ENCODE measurements at regions of chr6 and their contacts with region 1.

Region 1: DNA sequence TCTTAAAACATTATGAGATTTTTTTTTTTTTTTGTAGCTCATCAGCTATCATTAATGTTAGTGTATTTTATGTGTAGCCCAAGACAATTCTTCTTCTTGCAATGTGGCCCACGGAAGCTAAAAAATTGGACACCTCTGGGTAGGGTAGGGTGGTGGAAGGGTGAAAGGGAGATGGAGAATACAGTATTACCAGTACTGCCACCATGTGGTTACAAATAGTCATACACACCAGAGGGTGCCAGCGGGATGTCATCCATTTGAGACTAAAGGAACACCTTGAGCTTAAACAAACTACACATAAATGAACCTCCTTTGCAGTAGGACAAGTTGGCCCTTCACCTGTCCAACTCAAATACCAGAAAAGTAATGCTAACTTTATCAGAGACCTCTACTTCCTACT is 601.9 kb downstream of the HTR1B start:
- DNase-seq: peak; percentile 11
- H3K4me3 ChIP-seq: no peak overlapping the region
- H3K27ac ChIP-seq: no peak overlapping the region
- H3K4me1 ChIP-seq: no peaks in the 10 kb centered on the region
- H3K27me3 ChIP-seq: no peaks in the 10 kb centered on the region
- CTCF ChIP-seq: peak; percentile 31 to 55

Region 2: GRCh38 chr6:75934643-75935472 is 926.5 kb before region 1 on chr6:
- CTCF ChIA-PET with region 1: no interaction called
- dilution Hi-C with region 1: no loop called
- in situ Hi-C with region 1: no loop called
- intact Hi-C with region 1: loop called (anchors 2 kb)
- DNase-seq: peak; percentile 57
- H3K4me3 ChIP-seq: peak overlapping the region; percentile 25 to 44 (median 43)
- H3K27ac ChIP-seq: no peak overlapping the region
- H3K4me1 ChIP-seq: peaks cover 6% of the 10 kb centered on the region
- H3K27me3 ChIP-seq: no peaks in the 10 kb centered on the region
- CTCF ChIP-seq: peak; percentile 66 to 83

Region 3: GRCh38 chr6:76682842-76683241 is 178.6 kb before region 1 on chr6:
- CTCF ChIA-PET with region 1: no interaction called
- dilution Hi-C with region 1: no loop called
- in situ Hi-C with region 1: loop called in 1 of 2 experiments (anchors 25 kb)
- intact Hi-C with region 1: loop called (anchors 5 kb)
- DNase-seq: no peak
- H3K4me3 ChIP-seq: no peak overlapping the region
- H3K27ac ChIP-seq: no peak overlapping the region
- H3K4me1 ChIP-seq: no peaks in the 10 kb centered on the region
- H3K27me3 ChIP-seq: no peaks in the 10 kb centered on the region
- CTCF ChIP-seq: peak; percentile 34 to 41

Region 4: DNA sequence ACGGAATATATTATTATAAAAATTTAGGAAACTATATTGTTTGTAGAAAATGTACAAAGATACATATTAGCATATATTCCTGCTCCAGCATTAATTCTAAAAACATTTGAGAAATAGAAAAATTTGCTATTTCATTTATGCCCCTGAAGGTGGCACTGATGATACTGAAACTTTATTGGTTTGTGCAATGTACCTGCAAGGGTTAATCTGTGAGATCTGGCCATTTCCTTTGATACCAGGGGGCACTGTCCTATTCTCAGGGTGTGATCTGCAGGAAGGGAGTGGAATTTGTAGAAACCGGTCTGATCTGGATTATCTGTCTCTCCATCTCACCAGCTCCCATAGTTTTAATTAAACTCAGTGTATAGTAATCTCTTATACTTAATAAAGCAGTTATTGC is 163.8 kb before region 1 on chr6:
- CTCF ChIA-PET with region 1: no interaction called
- dilution Hi-C with region 1: no loop called
- in situ Hi-C with region 1: loop called in 1 of 2 experiments (anchors 25 kb)
- intact Hi-C with region 1: loop called (anchors 1 kb)
- DNase-seq: no peak
- H3K4me3 ChIP-seq: no peak overlapping the region
- H3K27ac ChIP-seq: no peak overlapping the region
- H3K4me1 ChIP-seq: no peaks in the 10 kb centered on the region
- H3K27me3 ChIP-seq: no peaks in the 10 kb centered on the region
- CTCF ChIP-seq: peak; percentile 30 to 45

Region 5: DNA sequence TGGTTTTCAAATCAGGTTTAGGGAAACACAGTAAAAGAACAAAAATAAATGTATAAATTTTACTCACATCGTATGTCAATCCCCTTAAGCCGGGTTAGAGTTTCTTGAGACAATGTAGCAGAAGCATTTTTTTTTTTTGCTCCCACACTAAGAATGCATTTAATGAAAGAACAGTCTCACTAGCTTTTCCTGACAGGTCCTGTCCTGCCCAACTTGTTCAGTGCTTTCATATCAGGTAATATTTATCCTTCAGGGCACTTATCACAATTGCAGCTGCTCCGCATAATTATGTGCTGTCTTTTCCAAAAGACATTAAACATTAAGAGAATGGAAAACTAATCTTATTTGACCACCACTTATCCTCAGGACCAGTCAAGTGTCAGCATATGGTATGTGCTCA is 30.1 kb before region 1 on chr6:
- CTCF ChIA-PET with region 1: no interaction called
- dilution Hi-C with region 1: no loop called
- in situ Hi-C with region 1: no loop called
- intact Hi-C with region 1: no loop called
- DNase-seq: peak; percentile 49
- H3K4me3 ChIP-seq: no peak overlapping the region
- H3K27ac ChIP-seq: no peak overlapping the region
- H3K4me1 ChIP-seq: no peaks in the 10 kb centered on the region
- H3K27me3 ChIP-seq: no peaks in the 10 kb centered on the region
- CTCF ChIP-seq: no peak

Region 6: DNA sequence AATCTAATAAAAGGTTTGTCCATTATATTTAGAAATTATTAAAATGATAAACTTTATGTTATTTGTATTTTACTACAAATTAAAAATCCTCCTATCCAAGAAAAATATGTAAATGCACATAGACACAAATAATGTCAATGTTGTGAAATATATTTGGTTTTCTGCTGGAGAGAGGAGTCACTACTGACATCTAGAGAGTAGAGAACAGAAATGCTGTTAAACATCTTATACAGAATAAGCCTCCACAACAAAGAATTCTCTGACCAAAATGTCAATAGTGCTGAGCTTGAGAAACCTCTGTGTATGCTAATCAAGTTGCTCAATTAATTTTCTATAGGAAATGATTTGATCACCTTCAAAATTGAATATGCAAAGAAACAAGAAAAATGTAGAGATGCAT is 589.5 kb after region 1 on chr6:
- CTCF ChIA-PET with region 1: no interaction called
- dilution Hi-C with region 1: no loop called
- in situ Hi-C with region 1: no loop called
- intact Hi-C with region 1: loop called (anchors 2 kb)
- DNase-seq: no peak
- H3K4me3 ChIP-seq: no peak overlapping the region
- H3K27ac ChIP-seq: no peak overlapping the region
- H3K4me1 ChIP-seq: peaks cover 3% of the 10 kb centered on the region
- H3K27me3 ChIP-seq: no peaks in the 10 kb centered on the region
- CTCF ChIP-seq: peak; percentile 21 to 37